ENCODE measurements at regions of chr17 and their contacts with region 1.

Region 1: DNA sequence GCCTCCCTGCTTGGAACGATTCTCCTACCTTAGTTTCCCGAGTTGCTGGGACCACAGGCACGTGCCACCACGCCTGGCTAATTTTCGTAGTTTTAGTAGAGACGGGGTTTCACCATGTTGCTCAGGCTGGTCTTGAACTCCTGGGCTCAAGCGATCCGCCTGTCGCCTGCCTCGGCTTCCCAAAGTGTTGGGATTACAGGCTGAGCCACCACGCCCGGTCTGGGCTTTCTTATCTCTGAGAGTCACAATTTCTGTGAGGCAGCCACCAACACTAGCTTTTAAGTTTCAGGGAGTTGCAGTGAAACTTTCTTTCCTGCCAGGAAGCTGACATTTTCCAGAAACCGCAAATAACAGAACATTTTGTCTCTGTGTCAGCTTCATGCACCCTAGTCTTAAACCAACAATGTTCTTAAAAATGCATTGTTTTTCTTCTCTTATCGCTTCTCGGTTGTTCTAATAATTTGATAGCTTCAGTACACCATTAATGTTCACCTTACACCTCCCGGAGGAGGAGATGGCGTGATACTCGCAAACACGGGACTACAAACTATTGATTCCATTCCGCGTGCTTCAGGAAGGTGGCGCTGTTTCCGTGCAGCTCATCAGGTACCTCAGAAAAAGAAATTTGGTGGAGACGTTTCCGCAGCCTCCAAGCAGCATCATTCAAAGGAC is 7.4 kb upstream of the DHRS7B start:
- DNase-seq: peak; percentile 70 to 74 (median 71)
- H3K4me3 ChIP-seq: no peak overlapping the region
- H3K4me3 Mint-ChIP-seq: peak overlapping the region in 2 of 8 donors; percentile 2 to 59
- H3K27ac ChIP-seq: no peak overlapping the region
- H3K27ac Mint-ChIP-seq: peak overlapping the region in 2 of 7 donors; percentile 4 to 35
- H3K4me1 ChIP-seq: peaks cover 3% of the 10 kb centered on the region
- H3K4me1 Mint-ChIP-seq: peaks cover 6 to 14% (median 8%) of the 10 kb centered on the region in 4 donors
- H3K27me3 ChIP-seq: no peaks in the 10 kb centered on the region
- H3K27me3 Mint-ChIP-seq: peaks cover 1 to 2% of the 10 kb centered on the region in 2 donors

Region 2: DNA sequence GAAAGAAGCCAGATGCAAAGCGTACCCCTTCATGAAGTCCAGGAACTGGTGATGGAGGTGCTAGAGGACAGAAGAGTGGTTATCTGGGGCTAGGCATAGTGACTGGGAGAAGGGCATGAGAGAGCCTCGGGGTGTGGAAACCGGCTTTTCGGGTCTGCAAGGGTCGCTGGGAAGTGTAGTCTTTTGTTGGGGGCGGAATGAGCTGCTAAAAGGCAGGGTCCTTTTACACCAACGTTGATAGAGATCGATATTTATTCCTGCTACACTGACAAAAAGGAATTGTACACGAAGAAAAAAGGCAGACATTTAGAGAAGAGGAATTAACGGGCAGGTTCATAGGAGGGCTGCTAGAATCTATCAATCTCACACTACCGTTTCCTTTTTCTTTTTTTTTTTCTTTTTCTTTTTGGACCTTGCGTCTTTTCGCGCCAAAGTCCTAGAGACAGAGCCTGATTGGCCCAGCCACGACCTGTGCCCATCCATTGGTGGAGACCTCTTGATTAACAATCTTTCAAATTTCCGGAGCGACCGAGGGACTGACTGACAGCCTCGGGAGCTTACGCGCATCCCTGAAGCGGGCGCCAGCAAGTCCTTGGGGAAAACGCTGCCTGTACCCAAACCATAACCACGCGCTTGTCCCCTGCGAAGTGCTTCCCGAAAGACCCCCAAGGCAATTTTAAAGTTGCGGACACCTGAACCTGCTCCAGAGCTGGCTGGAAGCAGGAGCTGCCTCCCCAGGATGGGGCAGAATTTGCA is 20.3 kb before region 1 on chr17:
- CTCF ChIA-PET with region 1: interaction called, 15 read pairs
- POLR2A ChIA-PET with region 1: no interaction called
- intact Hi-C with region 1: no loop called
- DNase-seq: peak; percentile 61 to 73 (median 65)
- H3K4me3 ChIP-seq: peak overlapping the region; percentile 68 to 70
- H3K4me3 Mint-ChIP-seq: peak overlapping the region; percentile 85 to 96 (median 90)
- H3K27ac ChIP-seq: no peak overlapping the region
- H3K27ac Mint-ChIP-seq: peak overlapping the region; percentile 19 to 83 (median 48)
- H3K4me1 ChIP-seq: peaks cover 13% of the 10 kb centered on the region
- H3K4me1 Mint-ChIP-seq: peaks cover 9 to 14% (median 11%) of the 10 kb centered on the region in 4 donors
- H3K27me3 ChIP-seq: no peaks in the 10 kb centered on the region
- H3K27me3 Mint-ChIP-seq: peaks cover 0 to 12% of the 10 kb centered on the region in 2 donors

Region 3: GRCh38 chr17:21108651-21109050 is 10.7 kb before region 1 on chr17:
- CTCF ChIA-PET with region 1: interaction called, 14 read pairs
- POLR2A ChIA-PET with region 1: no interaction called
- intact Hi-C with region 1: no loop called
- DNase-seq: no peak
- H3K4me3 ChIP-seq: no peak overlapping the region
- H3K4me3 Mint-ChIP-seq: no peak overlapping the region
- H3K27ac ChIP-seq: no peak overlapping the region
- H3K27ac Mint-ChIP-seq: no peak overlapping the region
- H3K4me1 ChIP-seq: no peaks in the 10 kb centered on the region
- H3K4me1 Mint-ChIP-seq: no peaks in the 10 kb centered on the region
- H3K27me3 ChIP-seq: no peaks in the 10 kb centered on the region
- H3K27me3 Mint-ChIP-seq: peaks cover 2 to 3% of the 10 kb centered on the region in 2 donors

Region 4: GRCh38 chr17:21132428-21132827 is 13.0 kb after region 1 on chr17:
- CTCF ChIA-PET with region 1: interaction called, 39 read pairs
- POLR2A ChIA-PET with region 1: no interaction called
- intact Hi-C with region 1: no loop called
- DNase-seq: no peak
- H3K4me3 ChIP-seq: no peak overlapping the region
- H3K4me3 Mint-ChIP-seq: no peak overlapping the region
- H3K27ac ChIP-seq: no peak overlapping the region
- H3K27ac Mint-ChIP-seq: no peak overlapping the region
- H3K4me1 ChIP-seq: peaks cover 7% of the 10 kb centered on the region
- H3K4me1 Mint-ChIP-seq: peaks cover 9 to 14% (median 11%) of the 10 kb centered on the region in 4 donors
- H3K27me3 ChIP-seq: no peaks in the 10 kb centered on the region
- H3K27me3 Mint-ChIP-seq: no peaks in the 10 kb centered on the region

Region 5: DNA sequence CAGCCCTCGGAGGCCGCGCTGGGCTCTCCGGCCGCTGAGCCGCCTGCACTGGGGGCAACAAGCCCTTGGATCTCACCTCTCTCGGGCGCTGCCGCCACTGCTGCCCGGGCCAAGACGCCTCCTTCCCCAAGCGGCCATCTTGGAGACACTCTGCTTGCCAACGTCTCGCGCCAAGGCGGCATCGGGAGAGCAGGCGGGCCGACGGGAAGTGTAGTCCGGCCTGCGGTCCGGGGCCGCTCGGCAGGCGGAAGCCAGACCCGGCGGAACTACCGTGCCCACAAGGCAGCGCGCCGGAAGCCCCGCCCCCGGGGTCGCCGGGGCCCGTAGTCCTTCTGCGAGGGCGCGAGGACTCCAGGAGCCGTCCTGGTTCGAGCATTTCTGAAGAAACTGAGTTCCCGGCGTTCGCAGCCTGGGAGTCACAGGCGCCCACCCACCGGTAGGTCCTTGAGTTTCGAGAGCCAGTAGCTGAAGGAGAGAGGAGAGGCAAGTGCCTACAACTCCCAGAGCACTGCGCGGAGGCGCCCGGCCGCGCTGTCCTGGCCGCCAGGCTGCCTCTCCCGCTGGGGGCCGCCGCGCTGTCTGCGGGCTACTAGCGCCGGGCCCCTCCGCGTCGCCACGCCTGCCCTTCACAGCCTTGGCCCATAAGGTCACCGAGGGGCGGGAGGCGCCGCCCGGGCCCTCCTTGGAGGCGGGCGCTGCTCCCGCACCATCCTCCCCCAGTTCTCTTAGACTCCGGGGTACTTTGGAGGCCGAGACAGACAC is 94.8 kb after region 1 on chr17 and contains the start of gene TMEM11:
- CTCF ChIA-PET with region 1: interaction called, 24 read pairs
- POLR2A ChIA-PET with region 1: no interaction called
- intact Hi-C with region 1: loop called (anchors 2 kb)
- DNase-seq: peak; percentile 94 to 96 (median 95)
- H3K4me3 ChIP-seq: peak within 1 kb of the TSS; percentile 64 to 94
- H3K4me3 Mint-ChIP-seq: peak within 1 kb of the TSS; percentile 89 to 97 (median 92)
- H3K27ac ChIP-seq: peak within 1 kb of the TSS; percentile 92
- H3K27ac Mint-ChIP-seq: peak within 1 kb of the TSS; percentile 82 to 96 (median 93)
- H3K4me1 ChIP-seq: peaks cover 39% of the 10 kb centered on the region
- H3K4me1 Mint-ChIP-seq: peaks cover 31 to 64% (median 47%) of the 10 kb centered on the region in 4 donors
- H3K27me3 ChIP-seq: no peaks in the 10 kb centered on the region
- H3K27me3 Mint-ChIP-seq: no peaks in the 10 kb centered on the region
- total RNA-seq, gene TMEM11: 18.6 to 21.7 TPM

Region 6: GRCh38 chr17:21275579-21276263 is 156.3 kb after region 1 on chr17:
- CTCF ChIA-PET with region 1: interaction called, 69 read pairs
- POLR2A ChIA-PET with region 1: interaction called, 3 read pairs
- intact Hi-C with region 1: loop called (anchors 1 kb)
- DNase-seq: peak; percentile 85 to 93 (median 87)
- H3K4me3 ChIP-seq: peak overlapping the region; percentile 26 to 71
- H3K4me3 Mint-ChIP-seq: peak overlapping the region; percentile 86 to 99 (median 90)
- H3K27ac ChIP-seq: peak overlapping the region; percentile 77
- H3K27ac Mint-ChIP-seq: peak overlapping the region; percentile 78 to 95 (median 93)
- H3K4me1 ChIP-seq: peaks cover 49% of the 10 kb centered on the region
- H3K4me1 Mint-ChIP-seq: peaks cover 32 to 52% (median 39%) of the 10 kb centered on the region in 4 donors
- H3K27me3 ChIP-seq: no peaks in the 10 kb centered on the region
- H3K27me3 Mint-ChIP-seq: no peaks in the 10 kb centered on the region

Region 7: DNA sequence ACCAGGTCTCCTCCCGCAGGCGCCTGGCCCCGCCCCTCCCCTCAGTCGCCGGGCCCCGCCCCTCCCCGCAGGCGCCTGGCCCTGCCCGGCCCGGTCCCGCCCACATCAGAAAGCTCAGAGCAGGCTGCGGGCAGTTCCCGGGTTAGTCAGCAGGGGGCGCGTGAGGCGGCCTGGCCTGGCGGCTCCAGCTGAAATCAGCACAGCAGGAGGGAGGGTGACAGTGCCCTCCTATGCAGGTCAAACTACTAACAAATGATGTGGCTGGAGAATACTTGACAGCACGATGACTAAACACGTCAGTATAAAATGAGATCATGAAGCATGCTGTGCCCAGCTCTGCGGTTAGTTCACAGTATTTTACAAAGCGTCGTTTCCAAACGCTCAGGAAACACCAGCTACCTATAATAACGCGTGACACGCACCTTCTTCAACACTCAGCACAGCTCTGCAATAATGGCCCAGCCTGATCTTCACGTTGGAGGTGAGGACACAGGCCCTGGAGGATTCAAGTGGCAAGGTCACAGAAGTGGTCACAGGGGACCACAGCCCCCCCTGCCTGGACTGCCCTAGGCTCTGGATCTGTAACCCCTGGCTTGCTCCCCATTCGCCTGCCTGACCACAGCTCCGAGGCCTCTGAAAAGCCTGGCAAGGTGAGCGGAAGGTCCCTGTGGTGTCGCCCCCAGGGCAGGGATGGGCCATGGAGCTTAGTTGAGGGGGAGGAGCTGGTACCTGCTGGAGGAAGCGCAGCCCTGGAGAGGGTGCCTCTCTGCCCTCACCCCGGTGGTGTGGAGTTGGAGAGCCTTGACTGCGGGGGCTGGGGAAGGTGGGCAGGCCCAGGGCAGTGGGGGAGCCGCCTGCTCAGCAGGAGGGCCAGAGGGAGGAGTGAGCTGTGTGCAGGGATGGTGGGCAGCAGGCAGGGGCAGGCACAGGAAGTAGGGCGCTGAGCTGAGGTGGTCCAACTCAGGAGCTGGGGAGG is 338.0 kb after region 1 on chr17:
- CTCF ChIA-PET with region 1: interaction called, 6 read pairs
- POLR2A ChIA-PET with region 1: no interaction called
- intact Hi-C with region 1: loop called (anchors 2 kb)
- DNase-seq: peak; percentile 87 to 92 (median 88)
- H3K4me3 ChIP-seq: no peak overlapping the region
- H3K4me3 Mint-ChIP-seq: peak overlapping the region in 5 of 8 donors; percentile 23 to 61 (median 49)
- H3K27ac ChIP-seq: no peak overlapping the region
- H3K27ac Mint-ChIP-seq: peak overlapping the region in 6 of 7 donors; percentile 60 to 90 (median 82)
- H3K4me1 ChIP-seq: peaks cover 11% of the 10 kb centered on the region
- H3K4me1 Mint-ChIP-seq: peaks cover 13 to 22% (median 17%) of the 10 kb centered on the region in 4 donors
- H3K27me3 ChIP-seq: no peaks in the 10 kb centered on the region
- H3K27me3 Mint-ChIP-seq: peaks cover 8 to 13% of the 10 kb centered on the region in 2 donors